AG04450 (cell line): ENCODE measurements at regions of chr6 and their contacts with region 1.

Region 1: DNA sequence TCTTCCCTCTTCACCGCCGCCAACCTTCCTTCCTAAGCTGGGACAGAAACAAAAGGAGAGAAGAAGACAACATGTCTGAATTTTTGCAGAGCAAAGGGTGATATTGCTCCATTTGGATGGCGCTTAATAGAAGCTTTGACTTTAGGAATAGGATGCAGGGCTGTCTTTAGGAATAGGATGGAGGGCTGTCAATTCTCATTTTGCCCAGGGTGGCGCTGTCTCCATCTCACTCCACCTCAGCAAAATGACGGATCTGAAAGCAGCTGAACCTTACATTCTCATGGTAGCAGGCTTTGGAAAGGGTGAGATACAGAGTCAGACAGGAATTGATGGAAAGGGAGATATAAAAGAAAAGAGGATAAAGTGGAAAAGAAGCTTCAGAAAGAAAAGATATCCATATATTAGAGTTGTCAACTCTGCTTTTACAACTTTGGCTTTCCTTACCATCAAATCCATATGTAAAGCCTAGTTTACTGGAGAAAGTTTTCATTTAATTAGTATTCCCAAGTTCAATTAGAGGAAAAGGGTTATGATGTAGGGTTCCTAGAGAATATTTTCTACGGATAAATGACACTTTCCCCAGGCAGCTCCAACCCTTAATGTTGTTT is 2.4 kb downstream of the MTCL3 start:
- DNase-seq: no peak
- H3K4me3 ChIP-seq: peak overlapping the region; percentile 71
- H3K27ac ChIP-seq: peak overlapping the region; percentile 13
- H3K27me3 ChIP-seq: no peaks in the 10 kb centered on the region
- CTCF ChIP-seq: peak; percentile 74

Region 2: DNA sequence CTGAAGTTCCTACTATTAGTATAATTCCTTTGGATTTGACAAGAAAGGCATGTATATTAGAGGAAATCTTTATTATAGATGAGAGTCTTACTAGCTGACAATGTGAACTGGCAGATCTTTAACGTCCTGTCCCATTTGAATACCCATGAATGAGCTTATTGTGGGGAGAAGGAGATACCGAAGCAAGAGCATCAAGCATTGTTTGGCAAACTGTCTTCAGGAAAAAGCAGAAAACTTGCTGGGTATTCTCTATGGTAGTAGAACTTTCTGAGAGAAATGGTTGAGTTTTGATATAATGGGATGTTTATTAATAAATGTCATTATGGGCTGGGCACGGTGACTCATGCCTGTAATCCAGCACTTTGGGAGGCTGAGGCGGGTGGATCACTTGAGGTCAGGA is 380.0 kb before region 1 on chr6:
- CTCF ChIA-PET with region 1: no interaction called
- POLR2A ChIA-PET with region 1: no interaction called
- DNase-seq: no peak
- H3K4me3 ChIP-seq: no peak overlapping the region
- H3K27ac ChIP-seq: no peak overlapping the region
- H3K27me3 ChIP-seq: no peaks in the 10 kb centered on the region
- CTCF ChIP-seq: no peak

Region 3: DNA sequence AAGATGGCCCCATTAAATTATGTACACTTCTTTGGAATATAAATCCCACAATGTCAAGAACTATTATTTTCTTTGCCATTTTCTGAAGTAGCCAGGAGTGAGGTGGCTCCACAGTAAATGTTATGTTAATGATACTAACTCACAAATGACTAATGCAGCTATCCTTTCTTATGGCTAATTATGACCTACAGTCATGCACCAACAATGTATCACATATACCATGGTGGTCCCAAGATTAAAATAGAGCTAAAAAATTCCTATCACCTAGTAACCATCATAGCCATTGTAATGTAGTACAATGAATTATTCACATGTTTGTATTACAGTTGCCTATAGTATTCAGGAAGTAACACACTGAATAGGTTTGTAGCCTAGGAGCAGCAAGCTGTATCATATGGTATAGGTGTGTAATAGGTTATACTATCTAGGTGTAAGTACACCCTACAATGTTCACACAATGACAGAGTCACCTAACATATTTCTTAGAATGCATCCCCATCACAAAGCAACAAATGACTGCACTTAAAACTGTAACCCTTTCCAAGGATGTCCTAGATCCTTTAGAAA is 188.6 kb before region 1 on chr6:
- CTCF ChIA-PET with region 1: interaction called, 13 read pairs
- POLR2A ChIA-PET with region 1: no interaction called
- DNase-seq: no peak
- H3K4me3 ChIP-seq: no peak overlapping the region
- H3K27ac ChIP-seq: no peak overlapping the region
- H3K27me3 ChIP-seq: no peaks in the 10 kb centered on the region
- CTCF ChIP-seq: no peak

Region 4: DNA sequence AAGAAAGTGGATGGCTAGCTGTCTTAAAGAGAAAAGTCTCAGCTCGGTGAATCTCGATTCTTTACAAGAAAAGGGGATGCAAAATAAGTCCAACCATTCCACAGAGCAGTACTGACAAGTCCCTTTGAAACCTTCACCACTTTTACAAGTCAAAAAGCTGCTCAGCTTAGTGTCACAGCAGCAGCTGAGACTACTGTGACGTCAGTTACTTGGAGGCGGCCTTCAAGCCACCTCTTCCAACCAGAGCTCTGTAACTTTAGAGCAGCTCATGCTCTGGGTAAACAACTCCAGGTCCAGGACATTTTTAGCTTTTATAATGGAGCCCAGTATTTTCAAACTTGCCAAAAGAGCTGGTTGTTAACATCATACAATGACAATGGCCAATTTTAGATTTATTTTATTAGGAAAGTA is 57.5 kb before region 1 on chr6 and contains the start of gene KIAA0408:
- CTCF ChIA-PET with region 1: interaction called, 29 read pairs
- POLR2A ChIA-PET with region 1: interaction called, 7 read pairs
- DNase-seq: no peak
- H3K4me3 ChIP-seq: peak within 1 kb of the TSS; percentile 43
- H3K27ac ChIP-seq: peak within 1 kb of the TSS; percentile 58
- H3K27me3 ChIP-seq: no peaks in the 10 kb centered on the region
- CTCF ChIP-seq: no peak
- polyA plus RNA-seq, gene KIAA0408: 4.7 and 6.3 TPM in 2 replicates

Region 5: DNA sequence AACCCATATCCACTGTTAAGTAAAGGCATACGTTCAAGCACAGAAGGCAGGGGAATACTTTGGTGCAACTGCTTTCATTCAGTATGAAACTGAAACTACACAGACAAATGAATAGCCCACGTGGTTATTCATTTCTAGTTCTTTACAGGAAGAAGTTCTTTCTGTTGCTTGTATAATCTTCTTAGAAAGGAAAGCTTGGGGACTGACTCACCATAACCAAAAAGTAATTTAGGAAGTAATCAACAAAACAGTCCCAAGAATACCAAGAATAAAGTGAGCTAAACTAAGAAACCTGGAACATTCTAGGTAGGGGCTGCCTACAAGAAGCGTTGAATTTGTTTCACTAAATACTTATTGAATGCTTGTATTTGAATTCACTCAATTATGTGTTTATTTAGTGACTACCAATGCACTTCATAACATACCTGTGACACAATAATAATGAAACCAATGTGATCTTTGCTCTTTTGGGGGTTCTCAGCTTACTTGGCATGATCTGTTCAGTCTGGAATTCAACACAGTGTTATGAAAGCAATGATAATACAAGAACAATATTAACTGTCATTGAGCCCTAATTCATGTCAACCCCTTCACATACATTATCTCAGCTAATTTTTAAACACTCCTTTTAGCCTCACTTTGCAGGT is 32.4 kb before region 1 on chr6:
- CTCF ChIA-PET with region 1: interaction called, 56 read pairs
- POLR2A ChIA-PET with region 1: no interaction called
- DNase-seq: no peak
- H3K4me3 ChIP-seq: no peak overlapping the region; the same call in 1 of the 2 replicates
- H3K27ac ChIP-seq: no peak overlapping the region
- H3K27me3 ChIP-seq: no peaks in the 10 kb centered on the region
- CTCF ChIP-seq: no peak

Region 6: GRCh38 chr6:127539272-127539671 is 22.5 kb after region 1 on chr6:
- CTCF ChIA-PET with region 1: interaction called, 42 read pairs
- POLR2A ChIA-PET with region 1: interaction called, 6 read pairs
- DNase-seq: no peak
- H3K4me3 ChIP-seq: no peak overlapping the region
- H3K27ac ChIP-seq: no peak overlapping the region
- H3K27me3 ChIP-seq: peaks cover 3% of the 10 kb centered on the region
- CTCF ChIP-seq: peak; percentile 47

Region 7: DNA sequence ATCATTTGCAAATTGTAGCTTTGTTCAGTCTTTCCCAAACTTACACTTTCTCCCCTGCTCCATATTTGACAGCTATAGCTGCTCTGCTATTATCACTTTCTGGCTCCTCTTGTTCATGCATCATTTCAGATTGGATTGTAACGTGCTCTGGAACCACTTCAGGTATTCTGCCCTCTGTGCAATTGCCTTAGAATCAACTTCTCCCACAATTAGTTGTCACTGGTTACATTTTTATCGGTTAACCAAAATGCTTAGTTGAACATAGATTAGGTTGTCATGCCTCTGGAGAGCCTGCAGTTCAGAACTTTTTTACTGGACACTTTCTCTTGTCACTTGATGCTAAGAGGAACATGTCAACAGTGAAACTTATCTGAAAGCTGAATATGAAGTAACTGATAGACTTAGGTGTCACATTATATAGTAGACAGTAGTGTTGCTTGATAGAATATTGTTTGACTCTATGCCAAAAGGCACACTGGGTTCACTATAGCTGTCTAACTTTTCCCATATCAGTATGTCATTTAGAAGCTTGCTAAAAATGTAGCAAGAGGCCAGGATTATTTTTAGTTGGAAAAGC is 1131.3 kb after region 1 on chr6:
- CTCF ChIA-PET with region 1: no interaction called
- POLR2A ChIA-PET with region 1: no interaction called
- DNase-seq: no peak
- H3K4me3 ChIP-seq: no peak overlapping the region
- H3K27ac ChIP-seq: no peak overlapping the region
- H3K27me3 ChIP-seq: no peaks in the 10 kb centered on the region
- CTCF ChIP-seq: no peak